CD8-positive, alpha-beta T cell (primary cell): ENCODE measurements at regions of chr22 and their contacts with region 1.

Region 1: GRCh38 chr22:45179276-45180044 is 15.7 kb downstream of the NUP50 start:
- DNase-seq: peak in 6 of 9 experiments; percentile 33 to 82 (median 50)
- ATAC-seq: peak; percentile 96
- H3K4me3 ChIP-seq: no peak overlapping the region
- H3K4me3 Mint-ChIP-seq: peak overlapping the region; percentile 5
- H3K27ac ChIP-seq: peak overlapping the region; percentile 12 to 40
- H3K27ac Mint-ChIP-seq: peak overlapping the region; percentile 94
- H3K4me1 ChIP-seq: peaks cover 38% of the 10 kb centered on the region
- H3K4me1 Mint-ChIP-seq: peaks cover 59% of the 10 kb centered on the region
- H3K27me3 ChIP-seq: no peaks in the 10 kb centered on the region
- H3K27me3 Mint-ChIP-seq: no peaks in the 10 kb centered on the region
- CTCF ChIP-seq: peak; percentile 27

Region 2: DNA sequence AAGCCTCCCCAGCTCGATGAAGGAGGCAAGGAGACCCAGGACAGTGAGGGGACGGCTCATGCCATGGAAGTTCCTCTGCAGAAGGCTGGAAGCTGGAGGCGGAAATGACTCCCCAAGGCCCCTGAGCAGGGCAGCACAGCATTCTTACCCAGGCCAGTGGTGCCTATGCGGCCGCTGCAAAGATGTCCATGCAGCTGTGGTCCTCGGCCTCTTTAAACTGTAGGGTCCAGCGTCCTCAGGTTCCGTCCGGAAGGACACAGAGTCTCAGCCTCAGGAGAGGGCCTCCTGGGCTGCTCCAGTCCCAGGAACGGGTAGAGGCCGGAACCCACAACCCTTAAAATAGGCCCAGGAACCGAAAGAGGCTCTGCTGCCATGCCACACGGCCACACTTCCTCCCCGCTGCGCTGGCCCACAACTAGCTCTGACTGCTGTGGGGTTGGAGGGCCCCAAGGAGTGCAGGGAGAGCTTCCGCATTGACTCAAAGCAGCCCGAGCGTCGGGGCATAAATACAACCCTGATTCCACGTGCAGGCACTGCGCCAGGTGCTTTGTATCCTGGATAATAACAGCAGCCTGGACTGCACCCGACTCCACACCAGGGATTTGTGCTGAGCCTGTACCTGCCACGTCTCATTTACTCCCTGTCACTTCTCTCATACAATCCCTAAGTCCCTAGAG is 55.8 kb after region 1 on chr22:
- CTCF ChIA-PET with region 1: no interaction called
- POLR2A ChIA-PET with region 1: no interaction called
- intact Hi-C with region 1: loop called in 1 of 2 experiments (anchors 5 kb)
- DNase-seq: peak in 3 of 9 experiments; percentile 12 to 49 (median 48)
- ATAC-seq: peak; percentile 45
- H3K4me3 ChIP-seq: no peak overlapping the region
- H3K4me3 Mint-ChIP-seq: peak overlapping the region; percentile 32
- H3K27ac ChIP-seq: no peak overlapping the region
- H3K27ac Mint-ChIP-seq: no peak overlapping the region
- H3K4me1 ChIP-seq: peaks cover 30% of the 10 kb centered on the region
- H3K4me1 Mint-ChIP-seq: peaks cover 49% of the 10 kb centered on the region
- H3K27me3 ChIP-seq: no peaks in the 10 kb centered on the region
- H3K27me3 Mint-ChIP-seq: no peaks in the 10 kb centered on the region
- CTCF ChIP-seq: no peak

Region 3: GRCh38 chr22:45296628-45297297 is 117.3 kb after region 1 on chr22:
- CTCF ChIA-PET with region 1: no interaction called
- POLR2A ChIA-PET with region 1: no interaction called
- intact Hi-C with region 1: no loop called
- DNase-seq: peak in 8 of 9 experiments; percentile 27 to 76 (median 50)
- ATAC-seq: peak; percentile 93
- H3K4me3 ChIP-seq: no peak overlapping the region
- H3K4me3 Mint-ChIP-seq: peak overlapping the region; percentile 58
- H3K27ac ChIP-seq: peak overlapping the region; percentile 39 to 52
- H3K27ac Mint-ChIP-seq: peak overlapping the region; percentile 91
- H3K4me1 ChIP-seq: peaks cover 20% of the 10 kb centered on the region
- H3K4me1 Mint-ChIP-seq: peaks cover 25% of the 10 kb centered on the region
- H3K27me3 ChIP-seq: no peaks in the 10 kb centered on the region
- H3K27me3 Mint-ChIP-seq: no peaks in the 10 kb centered on the region
- CTCF ChIP-seq: no peak

Region 4: DNA sequence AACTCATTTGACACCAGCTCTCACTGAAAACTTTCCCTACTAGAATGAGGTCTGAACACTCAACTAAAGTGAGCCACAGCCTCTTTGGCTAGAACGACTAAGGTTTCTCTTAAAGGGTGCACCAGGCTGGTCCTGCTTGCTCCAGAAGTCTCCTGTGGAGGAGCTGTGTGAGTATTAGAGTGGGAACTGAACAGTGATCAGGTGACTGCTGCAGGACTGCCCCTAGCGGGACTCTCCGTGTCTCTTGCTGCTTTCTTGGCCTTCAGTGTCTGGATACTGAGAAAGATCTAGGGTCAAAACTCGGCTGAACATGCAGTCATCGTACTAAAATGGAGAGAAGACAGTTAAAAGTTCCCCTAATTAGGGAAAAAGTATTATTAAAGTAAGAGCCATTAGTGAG is 164.9 kb after region 1 on chr22:
- CTCF ChIA-PET with region 1: no interaction called
- POLR2A ChIA-PET with region 1: no interaction called
- intact Hi-C with region 1: no loop called
- DNase-seq: no peak
- ATAC-seq: no peak
- H3K4me3 ChIP-seq: no peak overlapping the region
- H3K4me3 Mint-ChIP-seq: no peak overlapping the region
- H3K27ac ChIP-seq: no peak overlapping the region
- H3K27ac Mint-ChIP-seq: peak overlapping the region; percentile 52
- H3K4me1 ChIP-seq: peaks cover 19% of the 10 kb centered on the region
- H3K4me1 Mint-ChIP-seq: peaks cover 24% of the 10 kb centered on the region
- H3K27me3 ChIP-seq: no peaks in the 10 kb centered on the region
- H3K27me3 Mint-ChIP-seq: no peaks in the 10 kb centered on the region
- CTCF ChIP-seq: no peak